ENCODE measurements at regions of chr12 and their contacts with region 1.

Region 1: GRCh38 chr12:2890388-2891239 is at the start of gene TULP3:
- DNase-seq: peak; percentile 98
- H3K4me3 Mint-ChIP-seq: peak within 1 kb of the TSS; percentile 93
- H3K27ac Mint-ChIP-seq: peak within 1 kb of the TSS; percentile 95
- H3K4me1 Mint-ChIP-seq: peaks cover 21% of the 10 kb centered on the region
- H3K27me3 Mint-ChIP-seq: no peaks in the 10 kb centered on the region
- CTCF ChIP-seq: no peak
- total RNA-seq, gene TULP3: 19.7 and 21.6 TPM in 2 replicates

Region 2: DNA sequence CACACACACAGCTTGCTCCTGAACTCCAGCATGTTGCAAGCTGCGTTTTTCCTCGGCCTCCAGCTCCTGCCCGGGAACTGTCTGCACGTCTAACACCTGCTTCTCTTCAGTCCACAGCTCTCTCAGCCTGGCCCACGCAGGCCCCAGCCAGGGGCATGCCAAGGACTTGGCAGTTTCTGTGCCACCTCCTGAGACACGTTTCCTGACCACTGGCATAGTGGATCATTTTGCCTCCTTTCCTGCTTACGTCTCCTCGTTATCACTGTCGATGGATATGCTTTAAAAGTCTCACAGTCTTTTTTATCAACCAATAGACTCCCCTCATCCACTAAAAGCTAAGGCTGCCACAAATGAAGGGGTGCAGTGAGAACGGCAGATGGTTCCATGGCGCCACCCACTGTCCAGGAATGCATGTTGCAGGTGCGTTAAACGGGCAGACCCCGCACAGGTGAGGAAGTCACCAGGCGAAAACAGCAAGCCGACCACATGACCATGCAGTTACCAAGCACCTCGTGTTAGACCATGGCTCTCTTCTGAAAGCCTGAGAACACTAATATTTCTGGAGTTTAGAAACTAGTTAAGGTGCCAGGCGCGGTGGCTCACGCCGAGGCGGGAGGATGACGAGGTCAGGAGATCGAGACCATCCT is 53.9 kb after region 1 on chr12:
- CTCF ChIA-PET with region 1: interaction called, 10 read pairs
- intact Hi-C with region 1: loop called (anchors 10 kb)
- DNase-seq: peak; percentile 84
- H3K4me3 Mint-ChIP-seq: peak overlapping the region; percentile 66
- H3K27ac Mint-ChIP-seq: no peak overlapping the region
- H3K4me1 Mint-ChIP-seq: peaks cover 8% of the 10 kb centered on the region
- H3K27me3 Mint-ChIP-seq: no peaks in the 10 kb centered on the region
- CTCF ChIP-seq: peak; percentile 79

Region 3: DNA sequence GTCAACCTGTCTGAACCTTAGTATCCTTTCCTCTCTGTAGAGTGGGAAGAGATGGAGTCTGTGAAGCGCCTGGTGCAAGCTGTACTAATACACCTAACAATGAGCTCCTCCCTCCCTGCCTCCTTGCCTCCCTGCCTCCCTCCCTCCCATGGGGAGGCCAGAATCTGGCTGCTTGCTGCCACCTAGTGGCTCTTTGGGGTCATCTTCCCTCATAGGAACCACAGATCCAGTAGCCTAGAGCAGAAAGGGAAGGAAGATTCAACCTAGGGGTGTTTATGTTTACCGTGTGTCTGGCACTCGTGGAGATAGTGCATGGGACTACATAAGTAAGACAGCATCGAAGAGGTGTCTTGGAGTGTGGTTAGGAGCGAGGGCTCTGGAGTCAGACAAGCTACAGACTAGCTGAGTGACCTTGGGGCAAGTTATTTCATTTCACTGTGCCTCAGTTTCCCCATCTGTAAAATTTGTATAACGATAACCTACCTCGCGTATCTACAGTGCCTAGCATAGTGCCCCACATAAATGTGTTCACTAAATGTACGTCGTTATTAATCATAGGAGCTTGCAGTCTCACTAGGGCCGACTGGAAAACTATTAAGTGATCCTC is 151.0 kb after region 1 on chr12:
- CTCF ChIA-PET with region 1: interaction called, 11 read pairs
- intact Hi-C with region 1: loop called (anchors 10 kb)
- DNase-seq: peak; percentile 72
- H3K4me3 Mint-ChIP-seq: no peak overlapping the region
- H3K27ac Mint-ChIP-seq: no peak overlapping the region
- H3K4me1 Mint-ChIP-seq: no peaks in the 10 kb centered on the region
- H3K27me3 Mint-ChIP-seq: no peaks in the 10 kb centered on the region
- CTCF ChIP-seq: peak; percentile 64

Measured in Calu3 (cell line).